Esophagus squamous epithelium (tissue), 5 donors: ENCODE measurements at regions of chr10 and their contacts with region 1.

Region 1: GRCh38 chr10:70363971-70364771 is 18.3 kb downstream of the LRRC20 start:
- DNase-seq: peak; percentile 65
- H3K4me3 ChIP-seq: peak overlapping the region in 2 of 4 donors; percentile 5 to 47
- H3K27ac ChIP-seq: peak overlapping the region; percentile 69 to 95 (median 84)
- H3K4me1 ChIP-seq: peaks cover 0 to 16% (median 13%) of the 10 kb centered on the region in 3 donors
- H3K27me3 ChIP-seq: no peaks in the 10 kb centered on the region
- CTCF ChIP-seq: peak; percentile 78 to 98 (median 93)
- POLR2A ChIP-seq: no peak

Region 2: DNA sequence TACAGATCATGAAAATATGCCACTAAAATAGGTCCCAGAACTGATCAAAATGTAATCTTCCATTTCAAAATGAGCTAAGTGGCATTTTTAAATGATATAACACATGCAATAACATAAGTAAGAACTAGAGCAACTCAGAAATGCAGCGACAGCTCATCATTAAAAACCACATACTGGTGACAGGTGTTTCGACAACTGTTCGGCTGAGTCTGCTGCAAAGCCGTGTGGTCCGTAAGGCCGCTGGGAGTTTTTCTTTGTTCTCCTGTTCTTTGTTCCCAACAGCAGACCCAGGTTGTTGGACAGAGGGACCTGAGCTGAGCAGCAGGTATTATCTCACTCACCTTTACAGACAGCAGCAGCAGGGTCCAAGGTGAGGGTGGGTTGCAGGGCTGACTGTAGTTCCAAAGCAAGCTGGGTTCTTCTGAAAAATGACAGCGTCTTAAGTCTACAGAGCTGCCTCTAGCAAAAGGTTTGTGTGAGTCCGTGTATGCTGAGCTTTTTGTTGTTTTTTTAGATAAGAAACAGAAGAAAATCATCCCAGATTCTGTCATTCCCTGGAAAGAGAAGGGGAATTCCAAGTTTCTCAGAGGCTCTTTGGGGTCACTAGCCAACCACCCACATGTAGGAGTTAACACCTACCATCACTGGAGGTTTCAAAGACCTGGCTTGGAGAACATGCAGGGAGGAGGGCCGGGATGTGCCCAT is 356.9 kb before region 1 on chr10:
- intact Hi-C with region 1: no loop called
- DNase-seq: no peak
- H3K4me3 ChIP-seq: no peak overlapping the region
- H3K27ac ChIP-seq: no peak overlapping the region
- H3K4me1 ChIP-seq: no peaks in the 10 kb centered on the region
- H3K27me3 ChIP-seq: no peaks in the 10 kb centered on the region
- CTCF ChIP-seq: no peak
- POLR2A ChIP-seq: no peak

Region 3: GRCh38 chr10:70227548-70228320 is 136.4 kb before region 1 on chr10:
- intact Hi-C with region 1: loop called (anchors 5 kb)
- DNase-seq: no peak
- H3K4me3 ChIP-seq: no peak overlapping the region
- H3K27ac ChIP-seq: peak overlapping the region; percentile 30 to 78 (median 66)
- H3K4me1 ChIP-seq: peaks cover 0 to 61% (median 19%) of the 10 kb centered on the region in 3 donors
- H3K27me3 ChIP-seq: no peaks in the 10 kb centered on the region
- CTCF ChIP-seq: no peak
- POLR2A ChIP-seq: no peak

Region 4: DNA sequence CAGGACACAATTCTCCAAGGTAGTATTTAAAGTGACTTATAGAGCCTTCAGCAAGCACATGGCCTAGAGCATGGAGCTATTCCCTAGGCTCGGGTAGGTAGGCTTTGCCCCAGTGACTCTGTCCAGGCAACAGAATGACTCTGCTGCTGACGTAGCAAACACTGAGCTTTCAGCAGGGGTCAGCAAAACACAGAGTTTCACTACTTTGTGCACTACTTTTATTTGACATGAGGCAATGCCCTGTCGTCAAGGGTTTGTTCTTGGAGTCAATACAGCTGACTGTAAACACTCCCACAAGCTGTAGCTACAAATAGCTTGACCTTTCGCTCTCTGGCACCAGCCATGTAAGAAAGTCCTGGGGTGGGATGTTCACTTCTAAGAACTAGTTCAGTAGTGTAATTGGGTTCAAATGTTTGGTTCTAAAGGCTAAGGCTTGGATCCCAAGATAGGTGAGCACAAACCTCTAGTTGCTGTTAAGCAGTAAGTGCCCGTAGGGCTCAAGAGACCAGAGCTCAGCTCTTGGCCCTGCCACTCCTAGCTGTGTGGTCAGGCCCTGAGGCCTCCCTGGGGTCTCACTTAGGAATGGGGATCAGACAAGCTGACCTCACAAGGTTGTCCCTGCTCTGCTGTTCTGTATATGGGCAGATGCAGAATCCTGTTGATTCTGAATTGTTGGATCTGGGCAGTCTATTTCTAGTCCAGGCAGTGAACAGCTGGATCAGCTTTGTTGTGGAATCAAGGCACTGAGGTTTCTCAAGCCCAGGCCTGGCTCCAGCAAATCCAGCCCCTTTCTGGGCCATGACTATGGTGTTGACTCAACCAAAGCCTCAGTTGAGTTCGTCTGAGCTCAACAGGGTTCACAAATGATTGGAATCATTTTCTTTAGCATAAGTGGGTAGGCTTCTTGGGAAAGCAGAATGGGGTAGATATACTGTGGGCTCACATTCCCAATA is 66.6 kb after region 1 on chr10:
- intact Hi-C with region 1: no loop called
- DNase-seq: no peak
- H3K4me3 ChIP-seq: no peak overlapping the region
- H3K27ac ChIP-seq: peak overlapping the region in 3 of 4 donors; percentile 55 to 85 (median 78)
- H3K4me1 ChIP-seq: peaks cover 13 to 38% (median 23%) of the 10 kb centered on the region in 3 donors
- H3K27me3 ChIP-seq: no peaks in the 10 kb centered on the region
- CTCF ChIP-seq: peak in 1 of 6 experiments; percentile 10
- POLR2A ChIP-seq: no peak

Region 5: GRCh38 chr10:70455213-70455630 is 91.1 kb after region 1 on chr10:
- intact Hi-C with region 1: no loop called
- DNase-seq: no peak
- H3K4me3 ChIP-seq: no peak overlapping the region
- H3K27ac ChIP-seq: no peak overlapping the region
- H3K4me1 ChIP-seq: peaks cover 10 to 22% (median 10%) of the 10 kb centered on the region in 3 donors
- H3K27me3 ChIP-seq: peaks cover 0 to 51% (median 0%) of the 10 kb centered on the region in 4 donors
- CTCF ChIP-seq: no peak
- POLR2A ChIP-seq: no peak

Region 6: DNA sequence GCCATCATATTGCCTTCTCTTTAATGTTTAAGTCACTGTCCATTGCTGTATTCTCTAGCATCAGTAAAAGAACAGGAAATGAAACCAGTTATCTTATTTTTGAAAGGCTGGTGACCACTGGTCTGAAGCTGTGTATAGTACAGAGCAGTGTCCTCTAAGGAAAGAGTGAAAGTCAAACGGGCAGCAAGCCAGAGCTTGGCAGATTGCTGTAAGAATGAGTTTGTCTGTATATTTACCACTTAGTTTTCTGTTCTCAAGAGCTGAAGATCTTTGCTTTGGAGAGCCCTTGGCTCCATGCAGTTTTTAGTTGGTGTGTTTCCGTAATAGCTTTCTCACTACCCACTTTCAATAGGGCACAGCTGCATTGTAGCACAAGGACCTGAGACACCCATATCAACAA is 492.3 kb after region 1 on chr10:
- intact Hi-C with region 1: no loop called
- DNase-seq: no peak
- H3K4me3 ChIP-seq: no peak overlapping the region
- H3K27ac ChIP-seq: no peak overlapping the region
- H3K4me1 ChIP-seq: peaks cover 0 to 17% (median 3%) of the 10 kb centered on the region in 3 donors
- H3K27me3 ChIP-seq: no peaks in the 10 kb centered on the region
- CTCF ChIP-seq: no peak
- POLR2A ChIP-seq: no peak